Prostate gland (tissue), 2 donors: ENCODE measurements at regions of chr19 and their contacts with region 1.

Region 1: DNA sequence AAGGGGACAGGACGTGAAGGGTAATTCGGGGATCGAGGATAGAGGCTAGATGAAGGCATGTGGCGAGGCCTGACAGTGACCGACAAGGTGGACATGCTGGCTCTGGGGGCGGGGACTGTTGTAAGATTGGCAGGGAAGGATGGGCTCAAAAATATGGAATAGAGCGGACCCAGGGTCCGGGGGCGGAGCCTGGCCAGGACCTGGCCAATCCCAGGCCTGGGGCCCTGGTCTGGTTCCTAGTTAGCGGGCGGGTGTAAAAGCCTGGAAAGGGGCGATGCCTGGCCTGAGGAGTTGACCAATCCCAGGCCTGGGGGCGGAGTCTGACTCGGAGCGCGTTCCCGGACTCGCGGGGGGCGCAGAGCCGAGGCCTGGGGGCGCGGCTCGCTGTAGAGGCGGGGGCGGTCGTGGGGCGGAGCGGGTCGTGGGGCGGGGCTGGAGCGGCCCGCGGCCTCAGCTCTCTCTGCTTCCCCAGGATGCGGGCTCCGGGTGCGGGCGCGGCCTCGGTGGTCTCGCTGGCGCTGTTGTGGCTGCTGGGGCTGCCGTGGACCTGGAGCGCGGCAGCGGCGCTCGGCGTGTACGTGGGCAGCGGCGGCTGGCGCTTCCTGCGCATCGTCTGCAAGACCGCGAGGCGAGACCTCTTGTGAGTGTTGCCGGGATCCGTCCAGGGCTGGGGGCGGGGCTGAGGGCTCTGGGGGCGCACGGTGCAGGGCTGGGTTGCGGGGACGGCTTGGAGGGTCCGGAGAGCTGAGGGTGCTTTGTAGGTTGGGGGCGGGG is at the start of gene SLC27A1:
- DNase-seq: peak; percentile 99
- H3K4me3 ChIP-seq: peak within 1 kb of the TSS; percentile 86 to 90
- H3K27ac ChIP-seq: peak within 1 kb of the TSS; percentile 91 to 97
- H3K4me1 ChIP-seq: peaks cover 6% of the 10 kb centered on the region
- H3K27me3 ChIP-seq: no peaks in the 10 kb centered on the region
- CTCF ChIP-seq: no peak
- POLR2A ChIP-seq: peak; percentile 81
- total RNA-seq, gene SLC27A1: 73.3 to 78.7 TPM

Region 2: GRCh38 chr19:17346109-17346671 is 124.1 kb before region 1 on chr19:
- intact Hi-C with region 1: loop called (anchors 5 kb)
- DNase-seq: peak; percentile 60
- H3K4me3 ChIP-seq: no peak overlapping the region
- H3K27ac ChIP-seq: no peak overlapping the region
- H3K4me1 ChIP-seq: no peaks in the 10 kb centered on the region
- H3K27me3 ChIP-seq: no peaks in the 10 kb centered on the region
- CTCF ChIP-seq: peak; percentile 83 to 92 (median 90)
- POLR2A ChIP-seq: no peak

Region 3: GRCh38 chr19:17358395-17358794 is 111.9 kb before region 1 on chr19:
- intact Hi-C with region 1: no loop called
- DNase-seq: no peak
- H3K4me3 ChIP-seq: no peak overlapping the region
- H3K27ac ChIP-seq: no peak overlapping the region
- H3K4me1 ChIP-seq: no peaks in the 10 kb centered on the region
- H3K27me3 ChIP-seq: no peaks in the 10 kb centered on the region
- CTCF ChIP-seq: no peak
- POLR2A ChIP-seq: no peak

Region 4: GRCh38 chr19:17409990-17410389 is 60.3 kb before region 1 on chr19:
- intact Hi-C with region 1: no loop called
- DNase-seq: no peak
- H3K4me3 ChIP-seq: no peak overlapping the region
- H3K27ac ChIP-seq: no peak overlapping the region
- H3K4me1 ChIP-seq: no peaks in the 10 kb centered on the region
- H3K27me3 ChIP-seq: no peaks in the 10 kb centered on the region
- CTCF ChIP-seq: no peak
- POLR2A ChIP-seq: no peak

Region 5: GRCh38 chr19:17423429-17424208 is 46.6 kb before region 1 on chr19:
- intact Hi-C with region 1: loop called (anchors 2 kb)
- DNase-seq: no peak
- H3K4me3 ChIP-seq: no peak overlapping the region
- H3K27ac ChIP-seq: no peak overlapping the region
- H3K4me1 ChIP-seq: peaks cover 5% of the 10 kb centered on the region
- H3K27me3 ChIP-seq: no peaks in the 10 kb centered on the region
- CTCF ChIP-seq: no peak
- POLR2A ChIP-seq: no peak

Region 6: DNA sequence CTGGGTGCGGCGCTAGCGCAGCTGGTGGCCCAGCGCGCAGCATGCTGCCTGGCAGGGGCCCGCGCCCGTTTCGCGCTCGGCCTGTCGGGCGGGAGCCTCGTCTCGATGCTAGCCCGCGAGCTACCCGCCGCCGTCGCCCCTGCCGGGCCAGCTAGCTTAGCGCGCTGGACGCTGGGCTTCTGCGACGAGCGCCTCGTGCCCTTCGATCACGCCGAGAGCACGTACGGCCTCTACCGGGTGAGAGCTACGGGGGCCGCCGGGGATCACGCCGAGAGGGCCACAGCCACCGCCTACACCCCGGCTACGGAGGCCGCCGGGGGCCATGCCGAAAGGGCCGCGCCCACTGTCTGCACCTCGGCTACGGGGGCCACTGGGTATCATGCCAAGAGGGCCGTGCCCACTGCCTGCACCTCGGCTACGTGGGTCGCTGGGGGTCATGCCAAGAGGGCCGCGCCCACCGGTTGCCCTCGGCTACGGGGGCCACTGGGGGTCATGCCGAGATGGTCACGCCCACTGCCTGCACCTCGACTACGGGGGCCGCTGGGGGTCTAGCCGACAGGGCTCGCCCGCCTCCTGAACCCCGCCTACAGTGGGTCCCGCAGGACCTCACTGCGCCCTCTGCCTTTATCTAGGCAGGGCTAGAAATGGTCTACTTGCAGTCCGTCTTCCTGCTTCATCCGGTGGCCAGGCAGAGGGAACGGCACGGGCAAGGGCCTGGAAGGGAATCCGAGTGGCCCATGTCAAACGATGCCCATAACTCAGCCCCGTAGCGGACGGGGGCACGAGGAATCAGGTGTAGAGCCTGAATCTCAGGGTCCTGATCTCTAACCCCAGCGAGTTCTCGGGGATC is 41.7 kb after region 1 on chr19:
- intact Hi-C with region 1: loop called (anchors 5 kb)
- DNase-seq: peak; percentile 72
- H3K4me3 ChIP-seq: peak overlapping the region; percentile 93 to 94
- H3K27ac ChIP-seq: peak overlapping the region; percentile 98 to 99
- H3K4me1 ChIP-seq: peaks cover 3% of the 10 kb centered on the region
- H3K27me3 ChIP-seq: no peaks in the 10 kb centered on the region
- CTCF ChIP-seq: peak in 3 of 4 experiments; percentile 24 to 39 (median 39)
- POLR2A ChIP-seq: no peak